GM10248 (cell line): ENCODE measurements at regions of chr18 and their contacts with region 1.

Region 1: DNA sequence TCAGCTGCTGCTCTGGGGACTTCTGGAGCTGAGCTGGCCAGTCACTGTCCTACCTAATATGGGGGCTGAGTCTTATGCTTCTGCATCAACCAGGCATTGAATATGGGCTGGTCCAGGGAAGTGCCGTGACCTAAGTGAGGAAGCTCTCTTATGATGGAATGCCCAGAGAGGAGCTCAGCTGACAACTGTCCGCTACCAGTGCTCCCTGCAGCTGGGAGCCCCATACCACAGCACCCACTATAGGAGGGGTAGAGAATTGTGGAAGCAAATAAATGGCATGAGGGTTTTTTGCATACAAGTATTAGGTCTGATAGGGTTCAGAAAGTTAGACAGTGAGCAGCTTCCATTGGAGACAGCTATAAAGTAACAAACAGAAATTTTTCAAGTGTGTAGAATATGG is 4.5 kb downstream of the TIMM21 start:
- DNase-seq: no peak
- CTCF ChIP-seq: peak; percentile 3

Region 2: GRCh38 chr18:74139888-74140287 is 13.0 kb before region 1 on chr18:
- CTCF ChIA-PET with region 1: interaction called, 20 read pairs
- POLR2A ChIA-PET with region 1: no interaction called
- DNase-seq: peak; percentile 38
- CTCF ChIP-seq: no peak

Region 3: GRCh38 chr18:74225193-74225840 is 72.5 kb after region 1 on chr18:
- CTCF ChIA-PET with region 1: no interaction called
- POLR2A ChIA-PET with region 1: no interaction called
- DNase-seq: no peak
- CTCF ChIP-seq: no peak